Activated CD4-positive, alpha-beta T cell treated with anti-CD3 and anti-CD28 coated beads for 36 hours (primary cell): ENCODE measurements at regions of chr1 and their contacts with region 1.

Region 1: GRCh38 chr1:206001476-206001888 is 1.7 kb downstream of the RAB7B start:
- DNase-seq: peak; percentile 70
- ATAC-seq: peak; percentile 86
- H3K4me3 Mint-ChIP-seq: no peak overlapping the region
- H3K27ac Mint-ChIP-seq: no peak overlapping the region
- H3K4me1 Mint-ChIP-seq: peaks cover 34% of the 10 kb centered on the region
- H3K27me3 Mint-ChIP-seq: peaks cover 16% of the 10 kb centered on the region

Region 2: GRCh38 chr1:206050655-206051235 is 49.3 kb after region 1 on chr1:
- CTCF ChIA-PET with region 1: no interaction called
- POLR2A ChIA-PET with region 1: no interaction called
- intact Hi-C with region 1: loop called in 1 of 2 experiments (anchors 2 kb)
- DNase-seq: peak; percentile 82
- ATAC-seq: peak; percentile 91
- H3K4me3 Mint-ChIP-seq: peak overlapping the region; percentile 2
- H3K27ac Mint-ChIP-seq: peak overlapping the region; percentile 87
- H3K4me1 Mint-ChIP-seq: peaks cover 41% of the 10 kb centered on the region
- H3K27me3 Mint-ChIP-seq: peaks cover 5% of the 10 kb centered on the region